ENCODE measurements at regions of chr1 and their contacts with region 1.

Region 1: GRCh38 chr1:154335025-154335714 is 9.8 kb downstream of the ATP8B2 start:
- DNase-seq: peak; percentile 89
- CTCF ChIP-seq: peak; percentile 79

Region 2: DNA sequence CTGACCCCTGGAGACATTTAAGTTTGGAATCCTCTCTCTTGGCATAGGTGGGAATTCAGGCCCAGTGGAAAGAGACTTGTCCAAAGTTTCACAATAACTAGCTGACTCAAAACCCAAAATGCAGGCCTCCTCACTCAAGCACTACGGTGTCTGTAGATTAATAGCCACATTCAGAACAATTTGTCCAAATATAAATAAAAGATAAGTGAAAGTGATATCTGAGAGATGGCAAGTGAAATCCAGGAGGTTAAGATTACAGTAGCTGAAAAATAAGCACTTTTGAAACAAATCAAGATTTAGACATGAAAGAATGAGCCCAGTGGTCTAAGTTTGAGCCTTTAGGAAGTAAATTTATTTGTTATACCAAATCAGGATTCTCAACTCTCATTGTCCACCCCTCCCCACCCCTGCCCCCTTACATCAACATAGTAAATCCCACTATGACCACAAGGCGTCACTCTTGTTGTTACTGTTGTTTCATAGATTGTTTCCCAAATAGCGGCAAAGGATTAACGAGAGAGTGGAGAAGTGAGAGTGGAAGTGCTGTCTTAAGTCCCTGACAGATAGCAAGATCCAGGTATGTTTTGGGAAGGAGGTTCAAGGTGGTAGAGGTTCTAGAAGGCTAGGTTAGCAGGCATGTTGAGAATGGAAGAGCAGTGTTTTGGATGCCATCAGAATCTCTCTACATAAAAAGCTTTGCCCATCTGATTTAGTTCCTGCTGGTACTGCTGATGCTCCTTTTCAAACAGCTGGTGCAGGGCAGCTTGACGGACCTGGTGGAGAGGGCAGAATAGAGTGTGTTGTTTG is 136.2 kb before region 1 on chr1:
- in situ Hi-C with region 1: loop called (anchors 10 kb)
- DNase-seq: peak; percentile 56
- CTCF ChIP-seq: peak; percentile 42

Region 3: DNA sequence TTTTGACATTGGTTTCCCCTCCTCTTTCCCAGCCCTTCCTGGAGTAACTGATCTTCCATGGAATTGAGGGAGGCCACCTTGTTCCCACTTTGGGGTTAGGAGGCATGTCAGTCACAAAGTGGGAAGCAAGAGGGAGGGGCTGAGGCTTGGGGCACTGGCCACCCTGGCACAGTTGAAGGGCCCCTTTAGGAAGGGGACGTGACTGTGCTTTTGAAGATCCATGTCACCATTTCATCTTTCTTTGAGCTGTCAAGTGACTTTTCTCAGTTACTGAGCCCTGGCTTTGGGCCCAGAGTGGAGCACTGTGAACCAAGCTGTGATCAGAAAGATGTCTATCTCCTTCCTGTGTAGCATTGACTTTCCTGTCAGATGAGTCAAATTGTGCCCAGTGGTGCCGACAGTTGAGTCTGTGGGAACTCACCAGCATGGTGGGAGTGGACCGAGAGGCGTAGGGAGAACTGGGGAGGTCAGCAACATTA is 128.4 kb after region 1 on chr1:
- in situ Hi-C with region 1: no loop called
- DNase-seq: peak; percentile 58
- CTCF ChIP-seq: no peak